Activated B cell treated with CpG ODN at 0.5 μM for 24 hours (primary cell): ENCODE measurements at regions of chr16 and their contacts with region 1.

Region 1: DNA sequence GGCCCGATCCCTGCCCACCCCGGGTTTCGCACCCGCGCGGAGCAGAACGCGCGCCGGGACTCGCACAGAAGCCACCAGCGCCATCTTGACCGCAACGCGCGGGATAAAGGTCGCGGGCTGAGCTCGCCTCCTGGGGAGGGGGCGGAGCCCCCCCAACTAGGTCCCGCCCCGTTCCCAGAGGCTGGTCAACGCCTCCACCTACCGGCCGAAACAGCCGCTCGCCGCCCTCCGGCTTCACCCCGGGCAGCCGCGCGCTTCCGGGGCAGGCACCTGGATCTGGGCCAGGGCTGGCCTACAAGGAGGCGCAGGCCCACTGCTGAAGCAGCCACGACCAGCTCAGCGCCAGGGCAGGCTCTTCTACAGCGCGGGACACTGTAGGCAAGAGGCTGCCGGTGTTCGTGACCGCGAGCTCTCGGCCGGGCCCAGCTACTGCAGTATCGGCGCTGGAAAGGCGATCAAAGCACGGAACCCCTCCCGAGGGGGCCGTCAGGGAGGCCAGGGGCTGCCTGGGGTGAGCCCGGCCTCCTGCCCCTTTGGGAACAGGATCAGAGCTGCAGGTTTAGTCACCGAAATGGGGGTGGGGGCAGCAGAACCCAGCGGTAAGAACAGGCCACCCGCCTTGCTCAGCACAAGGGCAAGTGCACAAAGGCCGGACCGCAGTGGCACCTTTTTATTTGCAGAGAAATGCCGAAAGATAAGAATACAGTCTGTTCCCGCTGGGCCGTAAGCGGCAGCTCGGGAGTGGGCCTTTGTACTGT is at the start of gene ECI1:
- DNase-seq: peak; percentile 85
- ATAC-seq: peak; percentile 90
- H3K4me3 Mint-ChIP-seq: peak within 1 kb of the TSS; percentile 86
- H3K27ac Mint-ChIP-seq: peak within 1 kb of the TSS; percentile 90
- H3K4me1 Mint-ChIP-seq: peaks cover 35% of the 10 kb centered on the region
- H3K27me3 Mint-ChIP-seq: no peaks in the 10 kb centered on the region
- CTCF ChIP-seq: no peak
- total RNA-seq, gene ECI1: 38.1 and 43.0 TPM in 2 replicates

Region 2: DNA sequence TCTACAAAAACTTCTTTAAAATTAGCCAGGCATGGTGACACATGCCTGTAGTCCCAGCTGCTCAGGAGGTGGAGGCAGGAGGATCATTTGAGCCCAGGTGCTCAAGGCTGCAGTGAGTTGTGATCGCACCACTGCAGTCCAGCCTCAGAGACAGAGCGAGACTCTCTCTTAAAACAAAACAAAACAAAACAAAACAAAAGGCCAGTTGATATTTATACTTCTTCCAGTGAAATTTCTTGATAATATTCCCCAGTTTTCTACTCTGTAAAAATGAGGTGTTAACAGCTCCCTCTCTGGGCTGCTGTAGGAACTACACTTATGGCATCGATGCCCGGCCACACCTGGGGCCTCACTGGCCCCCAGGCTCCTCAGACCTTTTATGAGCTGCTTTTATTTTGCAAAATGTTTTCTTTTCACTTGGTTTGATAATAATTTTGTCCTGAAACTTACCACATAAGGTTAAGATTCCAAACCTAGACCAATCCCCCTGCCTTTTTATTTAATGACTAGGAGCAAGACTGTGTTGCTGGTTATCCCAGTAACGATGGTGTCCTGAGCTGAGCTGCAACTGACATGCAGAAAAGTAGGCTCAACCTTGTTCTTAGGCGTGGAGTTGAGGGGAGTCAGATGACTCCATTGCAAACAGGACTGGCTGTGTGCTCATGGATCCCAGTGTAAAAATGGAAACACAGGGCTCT is 528.1 kb before region 1 on chr16:
- CTCF ChIA-PET with region 1: no interaction called
- POLR2A ChIA-PET with region 1: no interaction called
- intact Hi-C with region 1: no loop called
- DNase-seq: no peak
- ATAC-seq: peak; percentile 59
- H3K4me3 Mint-ChIP-seq: peak overlapping the region; percentile 60
- H3K27ac Mint-ChIP-seq: peak overlapping the region; percentile 76
- H3K4me1 Mint-ChIP-seq: peaks cover 72% of the 10 kb centered on the region
- H3K27me3 Mint-ChIP-seq: no peaks in the 10 kb centered on the region
- CTCF ChIP-seq: peak; percentile 95

Region 3: DNA sequence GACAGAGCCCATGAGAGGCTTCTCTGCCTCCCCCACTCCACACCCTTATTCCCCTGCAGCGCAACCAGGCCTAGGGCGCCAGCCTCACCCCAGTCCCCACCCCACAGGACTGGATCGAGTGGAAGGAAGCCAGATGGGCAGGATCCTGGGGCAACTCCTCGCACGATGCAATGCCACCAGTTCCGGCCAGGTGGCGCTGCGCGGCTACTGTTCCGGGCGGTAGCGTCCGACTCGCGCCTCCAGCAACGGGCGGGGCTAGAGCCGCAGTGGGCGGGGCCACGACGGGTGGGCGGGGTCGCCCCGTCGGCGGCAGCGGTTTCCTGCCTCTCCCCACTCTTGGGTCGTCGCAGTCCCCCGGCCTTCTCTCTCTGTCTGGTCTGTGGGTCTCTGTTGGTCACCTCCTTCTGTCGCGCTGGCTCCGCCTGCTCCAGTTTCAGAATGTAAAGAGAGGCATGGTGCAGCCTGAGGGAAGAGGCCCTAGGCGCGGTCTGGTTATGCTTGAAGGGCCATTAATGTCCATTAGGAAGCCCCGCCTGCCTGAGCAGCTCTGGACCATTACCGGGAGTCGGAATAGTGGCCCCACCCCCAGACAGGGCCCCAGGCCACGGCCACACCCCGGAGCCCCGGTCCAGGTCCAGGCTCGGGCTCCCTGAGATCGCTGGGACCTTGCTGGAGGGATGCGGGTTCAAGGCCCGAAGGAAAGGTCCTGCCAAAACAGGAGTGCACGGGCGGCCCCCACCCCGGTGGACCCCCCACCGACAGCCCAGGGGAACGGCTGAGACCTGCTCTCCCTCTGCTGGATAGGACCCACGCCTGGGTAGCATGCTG is 228.3 kb before region 1 on chr16:
- CTCF ChIA-PET with region 1: interaction called, 3 read pairs
- POLR2A ChIA-PET with region 1: no interaction called
- intact Hi-C with region 1: loop called (anchors 1 kb)
- DNase-seq: peak; percentile 97
- ATAC-seq: peak; percentile 94
- H3K4me3 Mint-ChIP-seq: peak overlapping the region; percentile 79
- H3K27ac Mint-ChIP-seq: peak overlapping the region; percentile 73
- H3K4me1 Mint-ChIP-seq: peaks cover 24% of the 10 kb centered on the region
- H3K27me3 Mint-ChIP-seq: peaks cover 27% of the 10 kb centered on the region
- CTCF ChIP-seq: peak; percentile 82

Region 4: GRCh38 chr16:2213817-2214720 is 37.6 kb before region 1 on chr16:
- CTCF ChIA-PET with region 1: interaction called, 4 read pairs
- POLR2A ChIA-PET with region 1: interaction called, 11 read pairs
- intact Hi-C with region 1: no loop called
- DNase-seq: no peak
- ATAC-seq: no peak
- H3K4me3 Mint-ChIP-seq: peak overlapping the region; percentile 69
- H3K27ac Mint-ChIP-seq: no peak overlapping the region
- H3K4me1 Mint-ChIP-seq: peaks cover 14% of the 10 kb centered on the region
- H3K27me3 Mint-ChIP-seq: no peaks in the 10 kb centered on the region
- CTCF ChIP-seq: no peak

Region 5: GRCh38 chr16:2267913-2268666 is 16.4 kb after region 1 on chr16 and contains the start of gene RNPS1:
- CTCF ChIA-PET with region 1: interaction called, 4 read pairs
- POLR2A ChIA-PET with region 1: interaction called, 10 read pairs
- intact Hi-C with region 1: loop called (anchors 1 kb)
- DNase-seq: peak; percentile 98
- ATAC-seq: peak; percentile 91
- H3K4me3 Mint-ChIP-seq: peak within 1 kb of the TSS; percentile 93
- H3K27ac Mint-ChIP-seq: peak within 1 kb of the TSS; percentile 98
- H3K4me1 Mint-ChIP-seq: peaks cover 43% of the 10 kb centered on the region
- H3K27me3 Mint-ChIP-seq: no peaks in the 10 kb centered on the region
- CTCF ChIP-seq: no peak
- total RNA-seq, gene RNPS1: 228 and 232 TPM in 2 replicates

Region 6: GRCh38 chr16:2288726-2289125 is 37.1 kb after region 1 on chr16:
- CTCF ChIA-PET with region 1: no interaction called
- POLR2A ChIA-PET with region 1: no interaction called
- intact Hi-C with region 1: no loop called
- DNase-seq: no peak
- ATAC-seq: no peak
- H3K4me3 Mint-ChIP-seq: no peak overlapping the region
- H3K27ac Mint-ChIP-seq: no peak overlapping the region
- H3K4me1 Mint-ChIP-seq: no peaks in the 10 kb centered on the region
- H3K27me3 Mint-ChIP-seq: no peaks in the 10 kb centered on the region
- CTCF ChIP-seq: no peak

Region 7: DNA sequence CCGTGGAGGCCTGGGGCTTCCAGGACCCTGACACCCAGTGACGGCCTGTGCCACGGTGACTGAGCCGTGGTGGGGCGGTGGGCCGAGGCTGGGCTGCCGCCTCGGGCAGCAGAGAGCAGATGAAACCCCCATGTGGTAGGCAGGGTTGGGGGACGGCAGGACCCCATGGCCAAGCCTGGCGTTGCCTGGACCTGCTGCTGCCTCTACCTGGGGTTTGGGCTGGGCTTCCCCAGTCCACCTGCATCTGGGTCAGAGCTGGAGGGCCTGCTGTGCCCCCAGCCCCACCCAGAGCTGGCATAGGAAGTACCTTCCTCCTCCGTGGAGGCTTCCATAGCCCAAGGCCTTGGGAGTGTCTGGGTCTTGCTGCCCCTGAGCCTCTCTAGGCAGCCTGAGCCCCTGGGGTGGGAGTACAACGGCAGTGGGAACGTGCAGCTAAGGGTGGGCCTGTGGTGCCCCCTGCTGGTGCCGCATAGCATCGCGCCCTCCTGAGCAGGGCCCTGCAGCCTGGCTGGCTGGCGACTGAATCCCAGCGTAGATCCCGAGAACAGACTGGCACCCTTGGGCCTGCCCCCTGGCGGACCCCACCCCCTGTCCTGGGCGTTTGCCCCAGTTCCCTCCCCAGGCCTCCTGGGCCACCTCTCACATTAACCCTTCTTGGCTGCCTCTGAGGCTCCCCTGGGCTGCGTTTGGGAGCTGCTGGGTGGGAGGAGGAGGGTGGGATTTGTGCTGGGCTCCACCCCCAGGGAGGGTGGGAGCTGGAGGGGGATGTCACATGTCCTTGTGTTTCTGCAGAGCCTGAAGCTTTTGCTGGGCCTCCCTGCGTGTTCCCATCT is 249.5 kb after region 1 on chr16:
- CTCF ChIA-PET with region 1: interaction called, 5 read pairs
- POLR2A ChIA-PET with region 1: interaction called, 6 read pairs
- intact Hi-C with region 1: loop called (anchors 1 kb)
- DNase-seq: peak; percentile 77
- ATAC-seq: peak; percentile 98
- H3K4me3 Mint-ChIP-seq: no peak overlapping the region
- H3K27ac Mint-ChIP-seq: no peak overlapping the region
- H3K4me1 Mint-ChIP-seq: peaks cover 11% of the 10 kb centered on the region
- H3K27me3 Mint-ChIP-seq: no peaks in the 10 kb centered on the region
- CTCF ChIP-seq: peak; percentile 84